Natural killer cell (primary cell): ENCODE measurements at regions of chr16 and their contacts with region 1.

Region 1: GRCh38 chr16:27449434-27450195 is 47.6 kb downstream of the IL21R start:
- DNase-seq: peak; percentile 88 to 93
- ATAC-seq: peak; percentile 68 to 89 (median 79)
- H3K4me3 ChIP-seq: no peak overlapping the region
- H3K4me3 Mint-ChIP-seq: peak overlapping the region; percentile 81
- H3K27ac ChIP-seq: peak overlapping the region; percentile 98
- H3K27ac Mint-ChIP-seq: peak overlapping the region; percentile 90 to 98
- H3K4me1 ChIP-seq: peaks cover 100% of the 10 kb centered on the region
- H3K4me1 Mint-ChIP-seq: peaks cover 75 to 81% of the 10 kb centered on the region in 2 donors
- H3K27me3 ChIP-seq: no peaks in the 10 kb centered on the region
- H3K27me3 Mint-ChIP-seq: no peaks in the 10 kb centered on the region
- CTCF ChIP-seq: no peak

Region 2: DNA sequence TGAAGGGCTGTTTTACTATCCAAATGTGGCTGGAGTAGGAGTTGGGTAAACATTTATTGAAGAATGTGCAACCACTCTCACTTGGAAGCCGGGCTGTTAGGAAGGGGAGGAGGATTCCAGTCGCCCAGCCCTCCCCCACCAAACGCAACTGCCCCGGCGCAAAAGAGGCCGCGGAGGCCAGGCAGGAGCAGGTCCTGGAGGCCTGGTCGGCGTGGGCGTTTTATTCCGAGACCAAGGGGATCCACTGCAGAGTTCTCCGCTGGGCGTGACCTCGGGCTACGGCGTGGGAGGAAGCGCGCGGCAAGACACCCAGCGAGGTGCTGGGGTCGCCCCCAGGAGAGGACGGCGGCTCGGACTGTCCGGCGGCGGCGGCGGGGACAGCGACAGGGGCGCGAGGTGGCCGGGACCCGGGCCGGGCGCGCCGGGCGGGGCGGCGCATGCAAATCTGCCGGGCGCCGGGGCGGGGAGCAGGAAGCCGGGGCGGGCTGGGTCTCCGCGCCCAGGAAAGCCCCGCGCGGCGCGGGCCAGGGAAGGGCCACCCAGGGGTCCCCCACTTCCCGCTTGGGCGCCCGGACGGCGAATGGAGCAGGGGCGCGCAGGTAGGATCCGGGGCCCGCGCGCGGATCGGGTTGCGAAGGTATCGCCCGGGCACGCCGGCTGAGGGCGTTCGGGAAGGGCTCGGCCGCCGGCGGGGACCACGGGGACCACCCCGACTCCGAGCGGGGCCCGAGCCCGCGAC is 136.0 kb before region 1 on chr16 and contains the start of gene IL4R:
- intact Hi-C with region 1: loop called (anchors 2 kb)
- DNase-seq: peak; percentile 68 to 83
- ATAC-seq: peak; percentile 65 to 80 (median 79)
- H3K4me3 ChIP-seq: peak within 1 kb of the TSS; percentile 72
- H3K4me3 Mint-ChIP-seq: peak within 1 kb of the TSS; percentile 96
- H3K27ac ChIP-seq: peak within 1 kb of the TSS; percentile 92
- H3K27ac Mint-ChIP-seq: peak within 1 kb of the TSS; percentile 89 to 91
- H3K4me1 ChIP-seq: peaks cover 52% of the 10 kb centered on the region
- H3K4me1 Mint-ChIP-seq: peaks cover 36 to 50% of the 10 kb centered on the region in 2 donors
- H3K27me3 ChIP-seq: no peaks in the 10 kb centered on the region
- H3K27me3 Mint-ChIP-seq: no peaks in the 10 kb centered on the region
- CTCF ChIP-seq: no peak
- total RNA-seq, gene IL4R: 70.2 to 87.2 (median 86.0) TPM

Region 3: DNA sequence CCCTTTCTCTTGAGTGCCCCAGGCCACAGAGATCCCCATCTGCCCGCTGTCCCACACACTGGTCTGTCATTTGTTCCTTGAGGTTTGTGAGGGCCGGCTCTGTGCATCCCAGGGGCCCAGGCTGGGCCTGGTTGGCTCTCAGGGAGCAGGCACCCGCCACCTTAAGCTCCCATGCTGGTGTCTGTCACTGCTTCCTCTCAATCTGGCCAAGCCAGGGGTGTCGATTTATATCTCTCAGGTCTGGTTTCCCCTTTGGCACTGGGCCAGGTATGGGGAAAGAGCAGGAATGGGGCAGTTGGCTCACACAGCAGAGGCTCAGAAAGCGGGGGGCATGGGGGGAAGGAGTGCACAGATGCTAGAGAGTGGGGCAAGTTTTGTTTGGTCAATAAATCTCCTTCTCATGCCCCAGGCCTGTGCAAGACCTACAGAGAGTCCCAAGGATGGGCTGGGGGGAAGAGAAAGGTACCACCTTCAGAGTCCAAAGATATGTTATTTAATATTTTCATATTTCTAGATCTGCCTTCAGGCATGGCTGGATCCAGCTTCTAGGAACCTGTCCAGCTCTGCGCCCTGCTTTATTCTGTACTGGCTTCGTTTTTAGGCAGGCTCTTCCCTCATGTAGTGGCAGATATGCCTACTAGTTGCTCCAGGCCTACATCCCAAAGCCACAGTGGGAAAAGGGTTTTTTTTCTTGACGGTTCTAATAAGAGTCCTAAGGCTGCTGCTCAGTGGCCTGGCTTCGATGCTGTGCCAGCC is 101.5 kb before region 1 on chr16:
- intact Hi-C with region 1: no loop called
- DNase-seq: no peak
- ATAC-seq: no peak
- H3K4me3 ChIP-seq: no peak overlapping the region
- H3K4me3 Mint-ChIP-seq: no peak overlapping the region
- H3K27ac ChIP-seq: no peak overlapping the region
- H3K27ac Mint-ChIP-seq: peak overlapping the region in 1 of 2 donors; percentile 60
- H3K4me1 ChIP-seq: peaks cover 4% of the 10 kb centered on the region
- H3K4me1 Mint-ChIP-seq: peaks cover 0 to 14% of the 10 kb centered on the region in 2 donors
- H3K27me3 ChIP-seq: no peaks in the 10 kb centered on the region
- H3K27me3 Mint-ChIP-seq: no peaks in the 10 kb centered on the region
- CTCF ChIP-seq: no peak

Region 4: DNA sequence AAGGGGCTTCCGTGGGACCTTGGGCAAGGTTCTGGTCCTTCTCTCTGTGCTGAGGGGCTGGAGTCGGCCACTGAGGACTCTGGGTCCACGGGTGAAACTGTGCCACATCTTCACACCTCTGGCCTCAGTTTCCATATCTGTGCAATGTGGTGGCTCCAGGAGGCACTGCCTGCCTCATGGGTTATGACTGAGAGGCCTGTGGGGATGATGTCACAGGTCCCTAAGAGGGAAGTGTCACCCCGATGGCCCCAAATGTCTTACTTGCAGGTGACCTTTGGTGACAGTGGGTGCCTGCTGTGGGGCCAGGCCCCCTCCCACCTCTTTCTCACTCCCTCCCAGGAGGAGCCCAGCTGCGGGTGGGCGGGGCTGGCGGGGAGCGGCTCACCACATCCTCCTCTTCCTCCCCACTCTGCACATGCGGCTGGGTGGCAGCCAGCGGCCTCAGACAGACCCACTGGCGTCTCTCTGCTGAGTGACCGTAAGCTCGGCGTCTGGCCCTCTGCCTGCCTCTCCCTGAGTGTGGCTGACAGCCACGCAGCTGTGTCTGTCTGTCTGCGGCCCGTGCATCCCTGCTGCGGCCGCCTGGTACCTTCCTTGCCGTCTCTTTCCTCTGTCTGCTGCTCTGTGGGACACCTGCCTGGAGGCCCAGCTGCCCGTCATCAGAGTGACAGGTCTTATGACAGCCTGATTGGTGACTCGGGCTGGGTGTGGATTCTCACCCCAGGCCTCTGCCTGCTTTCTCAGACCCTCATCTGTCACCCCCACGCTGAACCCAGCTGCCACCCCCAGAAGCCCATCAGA is 47.6 kb before region 1 on chr16 and contains the start of gene IL21R:
- intact Hi-C with region 1: loop called (anchors 1 kb)
- DNase-seq: peak; percentile 85 to 92
- ATAC-seq: peak; percentile 77 to 92 (median 89)
- H3K4me3 ChIP-seq: peak within 1 kb of the TSS; percentile 72
- H3K4me3 Mint-ChIP-seq: peak within 1 kb of the TSS; percentile 98
- H3K27ac ChIP-seq: peak within 1 kb of the TSS; percentile 92
- H3K27ac Mint-ChIP-seq: peak within 1 kb of the TSS; percentile 98 to 99
- H3K4me1 ChIP-seq: peaks cover 89% of the 10 kb centered on the region
- H3K4me1 Mint-ChIP-seq: peaks cover 74 to 82% of the 10 kb centered on the region in 2 donors
- H3K27me3 ChIP-seq: no peaks in the 10 kb centered on the region
- H3K27me3 Mint-ChIP-seq: no peaks in the 10 kb centered on the region
- CTCF ChIP-seq: no peak
- total RNA-seq, gene IL21R: 24.3 to 45.7 (median 26.5) TPM

Region 5: DNA sequence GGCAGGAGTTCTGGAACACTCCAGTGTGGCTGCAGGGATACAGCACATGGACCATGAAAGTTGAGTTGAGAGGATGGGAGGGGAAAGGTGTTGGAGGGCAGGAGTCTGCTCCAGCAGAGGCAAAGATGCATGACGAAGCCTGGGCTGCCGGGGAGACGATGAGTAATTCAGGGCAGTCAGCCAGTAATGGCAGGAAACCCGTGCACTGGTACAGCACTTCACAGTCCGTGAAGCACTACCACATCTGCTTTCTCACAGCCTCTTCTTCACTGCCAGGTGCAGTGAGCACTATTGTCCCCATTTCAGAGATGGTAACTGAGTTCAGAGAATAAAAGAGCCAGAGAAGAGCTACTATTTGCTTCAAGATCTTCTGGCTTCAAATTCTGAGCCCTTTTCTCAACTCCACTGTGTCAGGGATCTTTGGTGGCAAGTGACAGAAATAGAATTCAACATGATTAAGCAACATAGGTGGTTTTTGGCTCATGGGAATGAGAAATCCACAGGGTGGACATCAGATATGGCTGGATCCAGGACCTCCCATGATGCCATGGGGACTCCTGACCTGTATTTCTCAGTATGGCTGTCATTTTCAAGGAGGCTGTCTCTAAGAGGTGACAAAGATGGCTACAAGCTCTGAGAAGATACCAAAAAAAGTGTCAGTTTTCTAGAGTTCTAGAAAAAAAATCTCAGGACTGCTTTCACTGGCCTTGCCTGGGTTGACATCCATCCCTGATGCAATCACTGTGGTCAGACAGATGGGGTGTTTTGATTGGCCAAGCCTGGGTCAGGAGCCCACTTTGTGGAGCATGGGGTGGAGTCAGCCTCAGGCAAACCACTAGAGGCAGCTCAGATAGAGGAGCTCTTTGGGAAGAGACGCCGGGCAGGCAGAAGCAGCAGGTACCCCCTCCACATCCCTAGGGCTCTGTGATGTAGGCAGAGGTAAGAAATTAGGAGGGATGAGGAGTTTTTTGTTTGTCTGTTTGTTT is 22.9 kb before region 1 on chr16:
- intact Hi-C with region 1: loop called (anchors 2 kb)
- DNase-seq: peak; percentile 67 to 84
- ATAC-seq: peak; percentile 92 to 95 (median 94)
- H3K4me3 ChIP-seq: no peak overlapping the region
- H3K4me3 Mint-ChIP-seq: peak overlapping the region; percentile 63
- H3K27ac ChIP-seq: peak overlapping the region; percentile 80
- H3K27ac Mint-ChIP-seq: peak overlapping the region; percentile 91 to 93
- H3K4me1 ChIP-seq: peaks cover 56% of the 10 kb centered on the region
- H3K4me1 Mint-ChIP-seq: peaks cover 30 to 35% of the 10 kb centered on the region in 2 donors
- H3K27me3 ChIP-seq: no peaks in the 10 kb centered on the region
- H3K27me3 Mint-ChIP-seq: no peaks in the 10 kb centered on the region
- CTCF ChIP-seq: no peak

Region 6: GRCh38 chr16:27461483-27462171 is 12.0 kb after region 1 on chr16:
- intact Hi-C with region 1: loop called (anchors 1 kb)
- DNase-seq: no peak
- ATAC-seq: no peak
- H3K4me3 ChIP-seq: no peak overlapping the region
- H3K4me3 Mint-ChIP-seq: peak overlapping the region; percentile 28
- H3K27ac ChIP-seq: no peak overlapping the region
- H3K27ac Mint-ChIP-seq: peak overlapping the region; percentile 72 to 96
- H3K4me1 ChIP-seq: peaks cover 76% of the 10 kb centered on the region
- H3K4me1 Mint-ChIP-seq: peaks cover 47 to 76% of the 10 kb centered on the region in 2 donors
- H3K27me3 ChIP-seq: no peaks in the 10 kb centered on the region
- H3K27me3 Mint-ChIP-seq: no peaks in the 10 kb centered on the region
- CTCF ChIP-seq: no peak

Region 7: DNA sequence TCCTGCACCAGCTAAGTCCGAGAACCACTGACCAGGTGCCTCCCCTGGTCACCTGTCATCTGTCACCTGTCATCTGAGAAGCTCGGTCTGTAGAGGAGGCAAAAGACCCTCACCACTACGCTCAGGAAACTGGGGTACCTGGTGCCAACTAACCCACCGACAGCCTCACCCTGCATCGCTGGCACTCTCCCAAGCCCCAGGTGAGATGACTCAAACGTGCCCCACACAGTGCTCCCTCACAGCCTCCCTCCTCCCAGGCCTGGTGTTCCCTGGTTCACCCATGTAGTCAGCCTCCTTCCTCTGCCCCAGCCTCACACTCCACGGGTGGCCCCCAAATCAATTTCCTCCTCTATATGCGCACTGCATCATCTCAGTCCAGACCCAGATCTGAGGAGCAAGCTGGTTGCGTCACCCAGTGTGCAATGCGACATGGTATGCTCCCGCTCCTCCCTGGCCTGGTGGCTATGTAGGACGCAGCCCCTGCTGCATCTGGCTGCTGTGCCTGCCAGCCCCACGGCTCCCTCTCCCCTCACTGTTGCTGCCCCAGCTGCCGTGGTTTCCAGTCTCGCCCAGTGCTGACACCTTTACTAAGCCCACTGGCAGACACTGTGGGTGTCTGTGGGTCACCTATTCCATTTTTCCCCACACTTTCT is 31.8 kb after region 1 on chr16:
- intact Hi-C with region 1: no loop called
- DNase-seq: no peak
- ATAC-seq: no peak
- H3K4me3 ChIP-seq: no peak overlapping the region
- H3K4me3 Mint-ChIP-seq: no peak overlapping the region
- H3K27ac ChIP-seq: no peak overlapping the region
- H3K27ac Mint-ChIP-seq: peak overlapping the region in 1 of 2 donors; percentile 45
- H3K4me1 ChIP-seq: no peaks in the 10 kb centered on the region
- H3K4me1 Mint-ChIP-seq: no peaks in the 10 kb centered on the region
- H3K27me3 ChIP-seq: no peaks in the 10 kb centered on the region
- H3K27me3 Mint-ChIP-seq: no peaks in the 10 kb centered on the region
- CTCF ChIP-seq: no peak